Gastrocnemius medialis (tissue), 4 donors: ENCODE measurements at regions of chr11 and their contacts with region 1.

Region 1: DNA sequence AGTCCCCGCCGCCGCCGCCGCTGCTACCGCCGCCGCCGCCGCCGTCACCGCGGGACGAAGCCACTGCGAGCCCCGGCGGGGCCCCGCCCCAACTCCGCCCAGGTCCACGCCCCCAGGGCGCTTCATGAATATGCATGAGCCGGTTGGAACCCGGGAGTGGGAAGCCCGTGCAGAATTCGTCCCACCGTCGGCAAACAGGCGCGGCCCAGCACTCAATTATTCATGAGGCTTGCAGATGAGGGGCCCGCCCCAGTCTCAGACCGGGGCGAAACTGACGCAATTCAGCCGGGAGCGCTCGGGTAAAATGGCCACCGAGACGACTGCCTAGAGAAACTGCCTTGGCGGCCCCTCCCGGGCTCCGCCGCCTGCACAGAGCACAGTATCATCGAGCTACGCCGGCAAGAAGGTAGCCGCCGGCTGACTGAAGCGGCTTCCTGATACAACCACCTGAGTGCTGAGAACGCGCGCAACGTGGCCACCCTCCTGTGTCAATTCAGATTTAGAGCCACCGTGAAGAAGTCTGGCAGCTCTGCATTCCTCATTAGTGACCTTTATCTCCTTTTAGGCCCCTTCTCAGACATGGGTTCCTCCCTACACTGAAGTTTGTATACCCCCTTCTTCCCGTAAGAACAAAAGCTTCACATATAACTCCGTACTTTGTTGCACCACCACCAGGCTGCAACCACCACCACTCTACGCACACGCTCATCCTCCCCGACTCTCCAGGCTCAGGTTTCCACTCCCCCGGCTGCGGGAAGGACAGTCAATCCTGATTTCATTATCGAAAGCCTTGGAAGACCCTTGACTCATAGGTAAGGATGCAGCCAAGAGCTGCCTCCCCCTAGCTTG is at the start of gene TNKS1BP1:
- DNase-seq: peak; percentile 99
- ATAC-seq: peak; percentile 74 to 77
- H3K4me3 ChIP-seq: peak within 1 kb of the TSS; percentile 82 to 95 (median 90)
- H3K27ac ChIP-seq: peak within 1 kb of the TSS; percentile 95 to 99 (median 97)
- H3K4me1 ChIP-seq: peaks cover 40 to 58% of the 10 kb centered on the region in 2 donors
- H3K27me3 ChIP-seq: no peaks in the 10 kb centered on the region
- CTCF ChIP-seq: no peak
- POLR2A ChIP-seq: peak; percentile 90 to 95
- total RNA-seq, gene TNKS1BP1: 98.5 to 165 (median 125) TPM

Region 2: DNA sequence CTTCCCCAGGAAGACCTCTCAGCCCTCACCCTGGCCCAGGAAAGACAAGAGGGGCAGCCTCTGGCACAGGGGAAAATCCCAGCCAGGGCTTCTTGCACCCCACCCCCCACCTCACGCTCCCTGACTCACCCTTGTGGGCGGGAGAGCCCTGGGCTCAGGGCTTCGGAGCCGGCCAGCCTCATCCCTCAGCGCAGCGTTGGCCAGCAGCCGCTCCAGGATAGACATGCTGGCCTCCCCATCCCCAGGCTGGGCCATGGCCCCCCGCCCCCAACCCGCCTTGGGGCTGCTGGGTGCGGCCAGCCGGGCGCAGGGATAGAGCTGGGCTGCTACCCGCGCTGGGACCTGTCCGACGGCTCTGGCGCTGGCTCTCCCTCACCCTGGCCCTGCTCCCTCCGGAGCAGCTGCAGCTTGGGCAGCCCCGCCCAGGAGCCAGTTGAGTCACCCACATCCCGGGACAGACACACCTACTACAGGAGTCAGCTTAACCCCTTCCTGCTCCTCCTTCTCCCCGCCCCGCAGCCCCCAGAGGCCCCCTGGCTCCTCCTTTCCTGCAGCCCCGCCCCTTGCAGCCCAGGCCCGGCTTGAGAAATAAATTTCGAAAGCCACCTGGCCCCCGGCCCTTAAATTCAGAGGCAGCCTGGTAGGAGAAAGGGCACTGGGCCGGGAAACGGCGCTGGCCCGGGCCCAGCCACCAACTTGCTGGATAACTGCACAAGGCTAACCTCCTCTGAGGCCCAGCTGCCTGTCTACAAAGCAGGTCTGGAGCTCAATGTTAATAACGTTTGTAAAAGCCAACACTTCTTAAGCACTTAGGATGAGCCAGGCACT is 13.8 kb before region 1 on chr11:
- in situ Hi-C with region 1: no loop called
- intact Hi-C with region 1: loop called (anchors 1 kb)
- DNase-seq: peak; percentile 97 to 99
- ATAC-seq: peak; percentile 73 to 75
- H3K4me3 ChIP-seq: peak overlapping the region; percentile 52 to 82 (median 66)
- H3K27ac ChIP-seq: peak overlapping the region; percentile 92 to 99 (median 98)
- H3K4me1 ChIP-seq: peaks cover 70 to 74% of the 10 kb centered on the region in 2 donors
- H3K27me3 ChIP-seq: no peaks in the 10 kb centered on the region
- CTCF ChIP-seq: no peak
- POLR2A ChIP-seq: peak; percentile 90 to 92

Region 3: DNA sequence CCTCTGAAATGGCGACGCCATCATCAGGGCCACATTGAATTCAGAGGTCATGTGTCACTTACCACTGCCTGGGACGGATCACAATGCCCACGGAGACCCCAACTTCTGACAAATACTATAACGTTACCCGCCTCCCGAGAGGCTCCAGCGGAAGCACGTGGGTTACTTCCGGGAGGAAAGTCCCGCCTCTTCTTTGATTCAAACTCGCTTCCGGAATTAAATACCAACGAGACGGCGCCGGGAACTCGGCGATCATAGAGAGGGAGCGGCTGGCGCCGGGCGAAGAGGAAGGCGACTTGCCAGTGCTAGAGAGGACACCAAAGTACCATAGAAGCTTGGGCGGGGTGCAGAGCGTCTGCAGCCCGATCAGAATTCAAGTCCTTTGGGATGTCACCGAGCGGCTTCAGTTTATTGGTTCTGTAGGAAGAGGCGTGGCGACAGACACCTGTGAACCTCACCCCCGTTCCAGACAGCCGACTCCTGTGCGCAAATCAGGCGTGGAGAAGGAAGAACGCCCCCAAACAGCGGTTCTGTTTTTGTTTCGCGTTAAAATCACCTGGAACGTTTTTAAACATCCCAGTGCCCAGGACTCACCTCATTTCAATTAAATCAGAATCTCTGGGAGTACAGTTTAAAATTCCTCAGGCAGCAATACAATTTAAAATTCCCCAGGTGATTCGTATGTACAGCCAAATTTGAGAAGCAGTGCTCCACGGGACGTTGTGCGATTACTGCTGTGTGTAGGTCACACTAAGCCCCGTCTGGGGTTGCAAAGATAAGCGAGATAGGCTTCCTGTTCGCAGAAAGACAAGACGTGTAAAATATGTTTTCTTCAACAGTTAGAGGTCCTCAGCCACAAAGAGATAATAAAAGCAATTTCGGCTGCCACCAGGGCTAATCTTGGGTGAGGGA is 205.7 kb after region 1 on chr11 and contains the start of gene TIMM10:
- in situ Hi-C with region 1: no loop called
- intact Hi-C with region 1: loop called (anchors 5 kb)
- DNase-seq: peak; percentile 96 to 98
- ATAC-seq: peak; percentile 95 to 97
- H3K4me3 ChIP-seq: peak within 1 kb of the TSS; percentile 84 to 94 (median 85)
- H3K27ac ChIP-seq: peak within 1 kb of the TSS; percentile 88 to 92 (median 90)
- H3K4me1 ChIP-seq: peaks cover 13 to 19% of the 10 kb centered on the region in 2 donors
- H3K27me3 ChIP-seq: no peaks in the 10 kb centered on the region
- CTCF ChIP-seq: no peak
- POLR2A ChIP-seq: peak; percentile 53 to 82
- total RNA-seq, gene TIMM10: 45.4 to 61.7 (median 49.5) TPM

Region 4: GRCh38 chr11:57667736-57668435 is 342.8 kb after region 1 on chr11 and contains the start of gene ZDHHC5:
- in situ Hi-C with region 1: no loop called
- intact Hi-C with region 1: loop called (anchors 5 kb)
- DNase-seq: peak; percentile 99
- ATAC-seq: peak; percentile 90 to 92
- H3K4me3 ChIP-seq: peak within 1 kb of the TSS; percentile 70 to 85 (median 76)
- H3K27ac ChIP-seq: peak within 1 kb of the TSS; percentile 92 to 97 (median 94)
- H3K4me1 ChIP-seq: peaks cover 19 to 34% of the 10 kb centered on the region in 2 donors
- H3K27me3 ChIP-seq: no peaks in the 10 kb centered on the region
- CTCF ChIP-seq: peak in 4 of 5 experiments; percentile 35 to 79 (median 69)
- POLR2A ChIP-seq: peak; percentile 81 to 85
- total RNA-seq, gene ZDHHC5: 34.0 to 49.2 (median 46.2) TPM

Region 5: GRCh38 chr11:57761301-57762234 is 436.5 kb after region 1 on chr11 and contains the start of gene CTNND1:
- in situ Hi-C with region 1: loop called in 1 of 4 experiments (anchors 25 kb)
- intact Hi-C with region 1: no loop called
- DNase-seq: peak; percentile 92 to 95
- ATAC-seq: peak; percentile 100
- H3K4me3 ChIP-seq: peak within 1 kb of the TSS; percentile 66 to 83 (median 78)
- H3K27ac ChIP-seq: peak within 1 kb of the TSS; percentile 90 to 97 (median 93)
- H3K4me1 ChIP-seq: peaks cover 34 to 37% of the 10 kb centered on the region in 2 donors
- H3K27me3 ChIP-seq: no peaks in the 10 kb centered on the region
- CTCF ChIP-seq: no peak
- POLR2A ChIP-seq: peak; percentile 67 to 80
- total RNA-seq, gene CTNND1: 19.7 to 29.8 (median 24.5) TPM